Esophagus muscularis mucosa (tissue), 4 donors: ENCODE measurements at regions of chr4 and their contacts with region 1.

Region 1: DNA sequence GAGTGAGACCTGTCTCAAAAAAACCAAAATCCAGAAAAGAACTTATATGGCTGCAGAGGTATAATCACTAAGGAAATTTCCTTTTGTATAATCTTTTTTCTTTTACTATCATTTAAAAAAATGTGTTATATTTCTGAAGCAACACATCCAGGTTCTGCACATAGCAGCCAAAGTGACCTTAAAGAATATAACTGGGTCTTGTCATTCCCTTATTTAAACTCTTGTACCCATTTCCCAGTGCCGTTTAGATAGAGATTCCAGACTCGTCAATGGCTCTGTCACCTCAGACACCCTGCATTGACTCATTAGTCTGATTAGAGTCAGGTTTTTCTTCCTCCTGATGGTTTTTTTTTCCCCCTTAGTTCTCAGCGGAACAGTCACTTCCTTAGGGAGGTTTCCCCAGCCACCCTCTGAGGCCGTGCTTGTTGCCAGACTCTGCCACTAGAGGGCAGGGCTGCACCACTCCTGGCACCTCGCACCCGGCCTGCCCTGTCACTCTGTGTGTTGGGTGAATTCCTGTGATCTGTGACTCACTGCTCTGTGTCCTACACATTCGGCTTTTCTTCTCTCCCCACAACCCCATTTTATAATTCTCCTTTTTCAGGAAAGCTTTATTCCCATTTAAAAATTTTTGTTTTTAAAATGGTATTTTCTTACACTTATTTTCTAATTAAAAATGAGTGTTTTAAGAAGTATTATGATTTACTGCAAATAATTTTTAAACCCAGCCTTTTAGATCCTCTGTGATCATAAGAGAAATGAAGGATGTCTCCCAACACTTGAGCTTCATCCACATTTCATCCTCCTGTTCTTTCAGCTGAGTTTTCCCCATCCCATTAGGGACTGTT is 32.1 kb downstream of the HTT start:
- DNase-seq: peak; percentile 98
- H3K4me3 ChIP-seq: no peak overlapping the region
- H3K27ac ChIP-seq: peak overlapping the region; percentile 73 to 83 (median 78)
- H3K4me1 ChIP-seq: peaks cover 24 to 53% (median 46%) of the 10 kb centered on the region in 4 donors
- H3K27me3 ChIP-seq: no peaks in the 10 kb centered on the region
- CTCF ChIP-seq: peak; percentile 95 to 99 (median 98)
- EP300 ChIP-seq: no peak
- POLR2A ChIP-seq: no peak

Region 2: DNA sequence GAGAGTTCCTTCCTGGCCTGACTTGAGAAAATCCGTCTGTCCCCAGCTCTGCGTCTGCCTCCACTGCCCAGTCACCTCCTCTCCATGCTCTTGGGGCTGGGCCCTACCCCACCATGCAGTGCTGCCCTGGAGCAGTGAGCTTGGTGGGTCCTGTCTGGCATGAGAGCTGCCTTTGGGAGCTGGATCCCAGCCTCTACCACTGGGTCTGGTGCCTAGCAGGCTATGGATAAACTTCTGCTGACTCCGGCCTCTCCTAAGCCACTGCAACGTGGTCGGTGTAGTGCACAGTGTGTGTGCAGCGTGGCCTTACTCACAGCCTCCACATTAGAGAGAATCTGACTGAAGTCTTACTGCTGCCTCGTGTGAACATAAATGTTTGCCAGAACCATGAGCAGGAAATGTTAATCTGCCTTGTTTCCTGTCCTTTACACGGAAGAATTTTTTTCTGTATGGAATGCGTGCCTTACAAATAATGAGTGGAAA is 15.6 kb after region 1 on chr4:
- intact Hi-C with region 1: loop called (anchors 2 kb)
- DNase-seq: no peak
- H3K4me3 ChIP-seq: no peak overlapping the region
- H3K27ac ChIP-seq: peak overlapping the region; percentile 78 to 86 (median 82)
- H3K4me1 ChIP-seq: peaks cover 32 to 71% (median 66%) of the 10 kb centered on the region in 4 donors
- H3K27me3 ChIP-seq: no peaks in the 10 kb centered on the region
- CTCF ChIP-seq: no peak
- EP300 ChIP-seq: no peak
- POLR2A ChIP-seq: no peak

Region 3: GRCh38 chr4:3135155-3136011 is 28.8 kb after region 1 on chr4:
- intact Hi-C with region 1: loop called (anchors 2 kb)
- DNase-seq: no peak
- H3K4me3 ChIP-seq: peak overlapping the region; percentile 10 to 27 (median 21)
- H3K27ac ChIP-seq: peak overlapping the region; percentile 53 to 74 (median 72)
- H3K4me1 ChIP-seq: peaks cover 0 to 26% (median 23%) of the 10 kb centered on the region in 4 donors
- H3K27me3 ChIP-seq: no peaks in the 10 kb centered on the region
- CTCF ChIP-seq: no peak
- EP300 ChIP-seq: no peak
- POLR2A ChIP-seq: no peak

Region 4: GRCh38 chr4:3201718-3202702 is 95.4 kb after region 1 on chr4:
- intact Hi-C with region 1: loop called (anchors 10 kb)
- DNase-seq: no peak
- H3K4me3 ChIP-seq: no peak overlapping the region
- H3K27ac ChIP-seq: peak overlapping the region; percentile 68 to 86 (median 75)
- H3K4me1 ChIP-seq: peaks cover 14 to 64% (median 49%) of the 10 kb centered on the region in 4 donors
- H3K27me3 ChIP-seq: no peaks in the 10 kb centered on the region
- CTCF ChIP-seq: no peak
- EP300 ChIP-seq: no peak
- POLR2A ChIP-seq: no peak